Activated CD4-positive, alpha-beta T cell treated with anti-CD3 and anti-CD28 coated beads, Interleukin-2, amount 10 ng/mL, durations not matched to agents 24 days and 14 days (primary cell): ENCODE measurements at regions of chr16 and their contacts with region 1.

Region 1: GRCh38 chr16:85055503-85056210 is 28.1 kb downstream of the KIAA0513 start:
- DNase-seq: peak; percentile 93
- H3K4me3 Mint-ChIP-seq: peak overlapping the region; percentile 71
- H3K27ac Mint-ChIP-seq: peak overlapping the region; percentile 93
- H3K4me1 Mint-ChIP-seq: peaks cover 35% of the 10 kb centered on the region
- H3K27me3 Mint-ChIP-seq: no peaks in the 10 kb centered on the region

Region 2: GRCh38 chr16:85027349-85027957 is 28.2 kb before region 1 on chr16 and contains the start of gene KIAA0513:
- intact Hi-C with region 1: loop called (anchors 1 kb)
- DNase-seq: peak; percentile 99
- H3K4me3 Mint-ChIP-seq: peak within 1 kb of the TSS; percentile 89
- H3K27ac Mint-ChIP-seq: peak within 1 kb of the TSS; percentile 93
- H3K4me1 Mint-ChIP-seq: peaks cover 36% of the 10 kb centered on the region
- H3K27me3 Mint-ChIP-seq: peaks cover 1% of the 10 kb centered on the region
- total RNA-seq, gene KIAA0513: 10.6 and 12.1 TPM in 2 replicates